ENCODE measurements at regions of chr20 and their contacts with region 1.

Region 1: DNA sequence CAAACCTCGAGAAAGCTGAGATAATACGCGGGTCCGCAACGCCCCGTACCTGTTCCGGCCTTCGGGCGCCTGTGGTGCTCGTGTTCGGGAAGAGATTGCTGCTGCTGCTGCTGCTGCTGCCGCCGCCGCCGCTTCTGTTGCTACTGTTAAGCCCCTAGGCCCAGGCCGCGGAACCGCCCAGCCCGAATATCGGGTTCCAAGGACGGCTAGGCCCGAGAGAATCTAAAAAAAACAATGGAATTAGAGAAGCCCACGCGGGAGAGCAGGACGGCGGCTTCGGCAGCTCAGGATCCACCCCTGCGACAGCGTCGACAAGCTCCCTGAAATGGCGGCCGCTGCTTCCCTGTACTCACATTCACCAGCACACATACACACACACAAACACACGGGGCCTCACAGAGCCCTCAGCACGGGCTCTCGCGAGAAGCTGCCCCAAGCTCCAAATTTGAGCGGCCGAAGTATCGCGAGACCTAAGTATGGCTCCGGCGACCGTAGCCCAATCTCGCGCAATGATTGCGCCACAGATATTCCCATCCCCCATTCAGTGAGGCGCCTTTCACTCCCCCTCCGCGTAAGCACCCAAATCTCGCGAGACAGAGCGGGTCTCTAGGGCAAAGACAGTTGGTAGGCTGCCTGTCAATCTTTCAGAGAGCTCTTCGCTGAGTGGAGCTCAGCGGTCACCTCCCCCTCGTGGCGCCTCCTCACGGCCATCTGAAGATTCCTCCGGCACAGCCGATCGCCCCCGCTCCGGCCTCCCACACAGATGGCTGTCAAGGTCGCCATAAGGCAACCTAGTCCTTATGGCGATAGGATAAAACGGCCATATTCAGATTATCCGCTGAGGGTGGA is at the start of gene RBM39:
- DNase-seq: peak; percentile 100
- ATAC-seq: peak; percentile 90
- H3K4me3 ChIP-seq: peak within 1 kb of the TSS; percentile 90 to 92 (median 91)
- H3K27ac ChIP-seq: peak within 1 kb of the TSS; percentile 96
- H3K4me1 ChIP-seq: peaks cover 50% of the 10 kb centered on the region
- H3K27me3 ChIP-seq: no peaks in the 10 kb centered on the region; a peak in 1 of 5 replicates
- CTCF ChIP-seq: peak; percentile 70
- EP300 ChIP-seq: peak; percentile 83 to 87
- POLR2A ChIP-seq: peak; percentile 89 to 97
- RAD21 ChIP-seq: peak; percentile 66
- total RNA-seq, gene RBM39: 431 and 788 TPM in 2 replicates

Region 2: GRCh38 chr20:35454881-35455609 is 287.1 kb before region 1 on chr20 and contains the start of gene CEP250:
- CTCF ChIA-PET with region 1: no interaction called
- POLR2A ChIA-PET with region 1: interaction called, 53 read pairs
- in situ Hi-C with region 1: no loop called
- intact Hi-C with region 1: no loop called
- DNase-seq: peak; percentile 98
- ATAC-seq: peak; percentile 95
- H3K4me3 ChIP-seq: peak within 1 kb of the TSS; percentile 79 to 89 (median 87)
- H3K27ac ChIP-seq: peak within 1 kb of the TSS; percentile 97
- H3K4me1 ChIP-seq: peaks cover 38% of the 10 kb centered on the region
- H3K27me3 ChIP-seq: no peaks in the 10 kb centered on the region; a peak in 1 of 5 replicates
- CTCF ChIP-seq: no peak; the same call in 1 of the 2 replicates
- EP300 ChIP-seq: no peak
- POLR2A ChIP-seq: peak; percentile 86 to 89
- RAD21 ChIP-seq: peak; percentile 61
- total RNA-seq, gene CEP250: 55.3 and 55.7 TPM in 2 replicates

Region 3: DNA sequence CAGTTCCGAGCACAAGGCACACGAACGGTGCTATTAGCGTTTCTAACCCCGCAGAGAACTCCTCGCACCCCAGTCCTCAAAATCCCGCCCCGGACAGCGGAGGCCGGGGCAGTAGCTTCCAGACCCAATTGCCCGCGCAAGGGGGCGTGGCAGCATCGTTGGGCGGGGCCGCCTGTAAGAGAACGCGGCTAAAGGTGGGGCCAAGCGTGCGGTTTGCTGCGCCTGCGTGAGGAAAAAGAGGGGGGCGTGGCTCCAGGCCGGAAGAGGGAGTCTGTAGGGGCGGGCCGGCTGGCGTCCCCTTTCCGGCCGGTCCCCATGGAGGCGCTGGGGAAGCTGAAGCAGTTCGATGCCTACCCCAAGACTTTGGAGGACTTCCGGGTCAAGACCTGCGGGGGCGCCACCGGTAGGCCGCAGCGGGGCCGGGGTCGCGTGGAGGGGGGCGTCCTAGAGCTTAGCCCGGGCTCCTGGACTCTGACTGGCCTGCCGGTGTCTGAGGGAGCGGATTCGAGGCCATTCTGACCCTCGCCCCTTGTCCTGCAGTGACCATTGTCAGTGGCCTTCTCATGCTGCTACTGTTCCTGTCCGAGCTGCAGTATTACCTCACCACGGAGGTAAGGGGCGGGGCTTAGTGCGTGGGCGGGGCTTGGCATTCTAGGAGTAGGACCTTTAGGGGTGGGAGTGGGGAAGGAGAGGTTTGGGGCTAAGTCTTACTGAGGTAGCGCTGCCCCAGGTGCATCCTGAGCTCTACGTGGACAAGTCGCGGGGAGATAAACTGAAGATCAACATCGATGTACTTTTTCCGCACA is 200.1 kb before region 1 on chr20 and contains the start of gene ERGIC3:
- CTCF ChIA-PET with region 1: no interaction called
- POLR2A ChIA-PET with region 1: interaction called, 41 read pairs
- in situ Hi-C with region 1: no loop called
- intact Hi-C with region 1: no loop called
- DNase-seq: peak; percentile 97
- ATAC-seq: peak; percentile 93
- H3K4me3 ChIP-seq: peak within 1 kb of the TSS; percentile 74 to 93 (median 79)
- H3K27ac ChIP-seq: peak within 1 kb of the TSS; percentile 85
- H3K4me1 ChIP-seq: peaks cover 29% of the 10 kb centered on the region
- H3K27me3 ChIP-seq: no peaks in the 10 kb centered on the region
- CTCF ChIP-seq: peak; percentile 43; the same call in 1 of the 2 replicates
- EP300 ChIP-seq: no peak
- POLR2A ChIP-seq: peak; percentile 82 to 92
- RAD21 ChIP-seq: no peak; the same call in 1 of the 2 replicates
- total RNA-seq, gene ERGIC3: 224 and 407 TPM in 2 replicates

Region 4: GRCh38 chr20:35699127-35699975 is 42.8 kb before region 1 on chr20 and contains the starts of genes NFS1 and ROMO1:
- CTCF ChIA-PET with region 1: no interaction called
- POLR2A ChIA-PET with region 1: interaction called, 132 read pairs
- in situ Hi-C with region 1: no loop called
- intact Hi-C with region 1: loop called (anchors 2 kb)
- DNase-seq: peak; percentile 94
- ATAC-seq: peak; percentile 84
- H3K4me3 ChIP-seq: peak within 1 kb of the TSS; percentile 90 to 98 (median 96)
- H3K27ac ChIP-seq: peak within 1 kb of the TSS; percentile 88
- H3K4me1 ChIP-seq: peaks cover 49% of the 10 kb centered on the region
- H3K27me3 ChIP-seq: no peaks in the 10 kb centered on the region; a peak in 1 of 5 replicates
- CTCF ChIP-seq: peak; percentile 94
- EP300 ChIP-seq: peak; percentile 19 to 54; a peak in 3 of 4 replicates
- POLR2A ChIP-seq: peak; percentile 93 to 96
- RAD21 ChIP-seq: peak; percentile 96
- total RNA-seq, gene NFS1: 88.1 and 94.4 TPM in 2 replicates
- total RNA-seq, gene ROMO1: 636 and 726 TPM in 2 replicates

Region 5: GRCh38 chr20:35726759-35727711 is 15.1 kb before region 1 on chr20:
- CTCF ChIA-PET with region 1: no interaction called
- POLR2A ChIA-PET with region 1: interaction called, 211 read pairs
- in situ Hi-C with region 1: no loop called
- intact Hi-C with region 1: no loop called
- DNase-seq: no peak
- ATAC-seq: peak; percentile 4
- H3K4me3 ChIP-seq: no peak overlapping the region
- H3K27ac ChIP-seq: no peak overlapping the region
- H3K4me1 ChIP-seq: peaks cover 15% of the 10 kb centered on the region
- H3K27me3 ChIP-seq: no peaks in the 10 kb centered on the region
- CTCF ChIP-seq: no peak
- EP300 ChIP-seq: no peak
- POLR2A ChIP-seq: peak in 1 of 2 experiments; percentile 52; a peak in 2 of 4 replicates
- RAD21 ChIP-seq: peak; percentile 8; the same call in 1 of the 2 replicates

Region 6: DNA sequence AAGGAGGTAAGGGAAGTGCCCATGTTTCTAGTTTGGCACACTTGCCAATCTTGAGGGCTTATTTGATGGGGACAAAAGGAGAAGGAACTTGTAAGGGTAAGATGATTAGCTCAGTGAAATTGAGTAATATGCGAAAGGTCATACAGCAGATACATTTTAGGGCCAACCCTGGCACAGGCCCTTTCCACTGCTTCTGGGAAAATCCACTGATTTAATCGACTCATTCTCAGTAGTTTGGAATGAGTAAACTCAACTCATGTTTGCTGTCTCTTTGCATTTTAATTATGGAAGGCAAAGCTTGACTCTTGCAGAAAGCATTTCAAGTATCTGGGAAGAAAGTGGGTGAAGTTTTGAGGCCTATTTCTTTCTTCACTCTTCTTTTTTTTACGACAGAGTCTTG is 49.7 kb after region 1 on chr20:
- CTCF ChIA-PET with region 1: no interaction called
- POLR2A ChIA-PET with region 1: interaction called, 10 read pairs
- in situ Hi-C with region 1: no loop called
- intact Hi-C with region 1: no loop called
- DNase-seq: no peak
- ATAC-seq: no peak
- H3K4me3 ChIP-seq: no peak overlapping the region
- H3K27ac ChIP-seq: no peak overlapping the region
- H3K4me1 ChIP-seq: peaks cover 6% of the 10 kb centered on the region; the same call in 1 of the 2 replicates
- H3K27me3 ChIP-seq: no peaks in the 10 kb centered on the region
- CTCF ChIP-seq: no peak
- EP300 ChIP-seq: no peak
- POLR2A ChIP-seq: no peak
- RAD21 ChIP-seq: no peak

Region 7: GRCh38 chr20:35883778-35884540 is 141.8 kb after region 1 on chr20:
- CTCF ChIA-PET with region 1: no interaction called
- POLR2A ChIA-PET with region 1: interaction called, 28 read pairs
- in situ Hi-C with region 1: loop called (anchors 5 kb)
- intact Hi-C with region 1: loop called (anchors 2 kb)
- DNase-seq: peak; percentile 82
- ATAC-seq: peak; percentile 99
- H3K4me3 ChIP-seq: no peak overlapping the region
- H3K27ac ChIP-seq: no peak overlapping the region
- H3K4me1 ChIP-seq: no peaks in the 10 kb centered on the region
- H3K27me3 ChIP-seq: no peaks in the 10 kb centered on the region
- CTCF ChIP-seq: peak; percentile 95
- EP300 ChIP-seq: no peak
- POLR2A ChIP-seq: no peak
- RAD21 ChIP-seq: peak; percentile 95

Region 8: DNA sequence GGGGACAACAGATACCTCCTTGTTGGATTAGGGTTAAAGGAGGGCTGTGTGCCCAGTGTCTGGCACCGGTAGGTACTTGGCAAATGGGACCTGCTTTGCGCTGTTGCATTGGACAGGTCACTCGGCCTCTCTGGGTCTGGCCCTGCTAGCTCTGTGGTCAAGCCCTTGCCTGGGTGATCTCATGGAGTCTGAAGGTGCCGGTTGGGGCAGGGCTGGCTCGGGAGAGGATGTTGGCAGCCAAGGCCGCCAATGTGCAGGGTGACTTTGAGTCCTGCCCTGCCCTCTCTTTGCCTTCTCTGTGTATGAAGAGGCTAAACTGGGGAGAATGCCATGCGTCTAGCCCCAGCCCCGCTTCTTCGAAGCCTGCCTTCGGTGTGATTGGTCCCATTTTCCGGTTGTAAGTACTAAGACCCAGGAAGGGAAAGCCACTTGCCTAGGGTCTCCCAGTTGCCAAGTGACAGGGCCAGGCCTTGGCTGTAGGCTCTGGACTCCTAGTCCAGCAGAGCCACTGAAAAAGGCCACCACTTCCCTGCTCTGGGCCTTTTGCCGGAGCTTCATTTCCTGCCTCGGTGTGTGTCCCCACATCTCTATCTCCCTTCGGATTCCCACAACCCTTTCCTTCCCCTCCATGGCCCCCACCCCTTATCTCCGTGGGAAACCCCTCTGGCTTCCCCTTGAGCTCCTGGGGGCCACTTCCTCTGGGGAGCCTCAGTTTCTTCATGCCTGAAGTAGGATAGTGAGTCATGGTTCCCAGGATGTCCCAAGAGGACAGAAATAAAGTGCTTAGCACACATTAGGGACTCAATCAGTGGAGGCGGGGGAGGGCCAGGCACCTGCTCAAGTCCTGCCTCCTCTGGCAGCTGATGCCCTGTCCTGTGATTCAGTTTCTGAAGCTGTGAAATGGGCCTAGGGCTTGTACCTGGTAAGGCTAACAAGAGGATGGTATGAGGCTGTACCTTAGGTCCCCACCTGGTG is 1607.7 kb after region 1 on chr20:
- CTCF ChIA-PET with region 1: no interaction called
- POLR2A ChIA-PET with region 1: no interaction called
- in situ Hi-C with region 1: no loop called
- intact Hi-C with region 1: no loop called
- DNase-seq: no peak
- ATAC-seq: no peak
- H3K4me3 ChIP-seq: no peak overlapping the region
- H3K27ac ChIP-seq: peak overlapping the region; percentile 4
- H3K4me1 ChIP-seq: peaks cover 68% of the 10 kb centered on the region
- H3K27me3 ChIP-seq: peaks cover 0 to 5% of the 10 kb centered on the region in 2 experiments; a peak in 1 of 5 replicates
- CTCF ChIP-seq: no peak
- EP300 ChIP-seq: no peak
- POLR2A ChIP-seq: peak in 1 of 2 experiments; percentile 10; a peak in 2 of 4 replicates
- RAD21 ChIP-seq: no peak

Measured in HepG2 (cell line).